AG04450 (cell line): ENCODE measurements at regions of chr9 and their contacts with region 1.

Region 1: GRCh38 chr9:113927277-113927676 is 51.2 kb downstream of the ZNF618 start:
- DNase-seq: no peak
- H3K4me3 ChIP-seq: no peak overlapping the region
- H3K27ac ChIP-seq: no peak overlapping the region
- H3K27me3 ChIP-seq: no peaks in the 10 kb centered on the region
- CTCF ChIP-seq: no peak

Region 2: GRCh38 chr9:113876151-113876992 is 50.9 kb before region 1 on chr9 and contains the start of gene ZNF618:
- CTCF ChIA-PET with region 1: no interaction called
- POLR2A ChIA-PET with region 1: interaction called, 12 read pairs
- DNase-seq: no peak
- H3K4me3 ChIP-seq: peak within 1 kb of the TSS; percentile 68
- H3K27ac ChIP-seq: peak within 1 kb of the TSS; percentile 65
- H3K27me3 ChIP-seq: no peaks in the 10 kb centered on the region
- CTCF ChIP-seq: peak; percentile 52
- polyA plus RNA-seq, gene ZNF618: 8.7 and 11.2 TPM in 2 replicates

Region 3: DNA sequence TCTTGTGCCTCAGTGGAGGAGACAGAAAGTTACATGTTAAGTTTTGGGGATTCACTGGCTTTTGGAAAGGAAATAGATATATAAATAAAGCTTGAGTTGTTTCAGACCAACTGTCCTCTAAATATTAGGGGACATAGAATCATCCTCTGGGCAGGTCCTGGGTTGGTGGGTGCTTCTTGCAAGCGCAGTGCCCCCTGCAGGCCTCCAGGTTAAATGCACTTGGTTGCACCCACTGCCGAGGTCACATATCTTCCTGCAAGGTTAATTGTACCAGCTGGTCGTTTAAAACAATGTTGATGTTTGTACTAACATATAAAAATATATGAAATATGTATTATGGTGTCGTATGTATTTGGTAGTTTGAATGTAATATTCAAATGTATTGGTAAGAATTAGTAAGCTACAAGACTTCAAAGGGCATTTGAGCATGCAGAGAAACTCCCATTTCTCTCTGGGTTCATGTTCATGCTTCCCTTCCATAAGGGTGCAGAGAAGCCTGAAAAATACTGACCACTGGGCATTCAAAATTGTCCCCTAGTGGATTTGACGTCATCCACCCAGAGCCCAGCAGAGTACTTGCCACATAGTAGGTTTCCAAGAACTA is 35.8 kb after region 1 on chr9:
- CTCF ChIA-PET with region 1: interaction called, 14 read pairs
- POLR2A ChIA-PET with region 1: no interaction called
- DNase-seq: no peak
- H3K4me3 ChIP-seq: no peak overlapping the region
- H3K27ac ChIP-seq: no peak overlapping the region
- H3K27me3 ChIP-seq: no peaks in the 10 kb centered on the region
- CTCF ChIP-seq: peak; percentile 69